ENCODE measurements at regions of chr22 and their contacts with region 1.

Region 1: GRCh38 chr22:42614312-42615091 is at the start of gene POLDIP3:
- DNase-seq: peak; percentile 96 to 99 (median 98)
- ATAC-seq: peak; percentile 84
- H3K4me3 ChIP-seq: peak within 1 kb of the TSS; percentile 91
- H3K4me3 Mint-ChIP-seq: peak within 1 kb of the TSS; percentile 92 to 99 (median 97)
- H3K27ac ChIP-seq: peak within 1 kb of the TSS; percentile 91
- H3K27ac Mint-ChIP-seq: peak within 1 kb of the TSS; percentile 98 to 100 (median 100)
- H3K4me1 ChIP-seq: peaks cover 34 to 40% of the 10 kb centered on the region in 2 donors
- H3K4me1 Mint-ChIP-seq: peaks cover 46 to 65% (median 54%) of the 10 kb centered on the region in 7 donors
- H3K27me3 ChIP-seq: no peaks in the 10 kb centered on the region
- H3K27me3 Mint-ChIP-seq: peaks cover 0 to 5% (median 0%) of the 10 kb centered on the region in 5 donors
- total RNA-seq, gene POLDIP3: 62.5 to 86.7 (median 75.2) TPM

Region 2: DNA sequence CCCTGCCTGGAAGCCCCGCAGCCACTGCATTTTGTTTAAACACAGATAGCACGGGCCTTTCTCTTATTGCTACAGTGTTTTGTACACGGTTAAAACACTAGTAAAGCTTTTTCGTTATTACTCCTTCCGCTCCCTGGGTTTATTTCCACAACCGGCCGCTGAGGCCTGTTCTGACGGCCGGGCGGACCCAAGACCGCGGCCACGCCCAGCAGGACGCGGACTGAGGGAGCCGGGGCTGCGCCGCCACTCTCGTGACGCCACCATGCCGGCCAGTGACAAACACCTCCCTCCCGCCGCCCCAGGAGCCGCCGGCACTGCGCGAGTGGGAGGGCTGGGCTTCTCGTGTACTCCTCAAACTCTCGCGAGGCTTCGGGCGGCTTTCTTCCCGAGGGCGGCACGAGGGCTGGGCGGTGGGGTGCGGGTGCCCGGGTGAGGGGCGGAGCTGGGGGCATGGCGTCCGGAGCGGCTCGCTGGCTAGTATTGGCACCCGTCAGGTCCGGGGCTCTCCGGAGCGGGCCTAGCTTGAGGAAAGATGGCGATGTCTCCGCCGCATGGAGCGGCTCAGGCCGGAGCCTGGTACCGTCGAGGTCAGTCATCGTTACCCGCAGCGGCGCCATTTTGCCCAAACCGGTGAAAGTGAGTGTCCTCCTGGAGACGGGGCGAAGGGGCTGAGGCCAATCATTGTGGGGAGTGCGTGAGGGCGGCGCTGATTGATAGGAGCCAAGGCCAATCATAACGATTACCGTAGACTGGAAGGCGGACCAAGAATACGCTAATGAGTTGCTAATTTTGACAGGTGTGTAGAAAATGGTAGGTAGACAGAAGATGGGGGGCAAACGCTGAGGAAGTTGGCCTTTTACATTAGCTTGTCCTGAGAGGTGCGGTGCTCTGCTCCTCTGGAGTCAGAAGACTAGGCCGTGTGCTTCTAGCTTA is 534.9 kb before region 1 on chr22 and contains the start of gene SMDT1:
- CTCF ChIA-PET with region 1: no interaction called
- POLR2A ChIA-PET with region 1: interaction called, 8 read pairs
- intact Hi-C with region 1: loop called in 1 of 2 experiments (anchors 1 kb)
- DNase-seq: peak; percentile 96 to 100 (median 99)
- ATAC-seq: peak; percentile 94
- H3K4me3 ChIP-seq: peak within 1 kb of the TSS; percentile 98
- H3K4me3 Mint-ChIP-seq: peak within 1 kb of the TSS; percentile 94 to 99 (median 96)
- H3K27ac ChIP-seq: peak within 1 kb of the TSS; percentile 97
- H3K27ac Mint-ChIP-seq: peak within 1 kb of the TSS; percentile 96 to 99 (median 99)
- H3K4me1 ChIP-seq: peaks cover 10 to 16% of the 10 kb centered on the region in 2 donors
- H3K4me1 Mint-ChIP-seq: peaks cover 9 to 52% (median 43%) of the 10 kb centered on the region in 7 donors
- H3K27me3 ChIP-seq: no peaks in the 10 kb centered on the region
- H3K27me3 Mint-ChIP-seq: no peaks in the 10 kb centered on the region
- total RNA-seq, gene SMDT1: 40.4 to 105 (median 98.8) TPM

Region 3: GRCh38 chr22:42520663-42521546 is 93.6 kb before region 1 on chr22:
- CTCF ChIA-PET with region 1: no interaction called
- POLR2A ChIA-PET with region 1: no interaction called
- intact Hi-C with region 1: loop called in 1 of 2 experiments (anchors 1 kb)
- DNase-seq: no peak
- ATAC-seq: no peak
- H3K4me3 ChIP-seq: no peak overlapping the region
- H3K4me3 Mint-ChIP-seq: peak overlapping the region; percentile 30 to 96 (median 54)
- H3K27ac ChIP-seq: no peak overlapping the region
- H3K27ac Mint-ChIP-seq: peak overlapping the region in 8 of 9 donors; percentile 29 to 97 (median 42)
- H3K4me1 ChIP-seq: peaks cover 0 to 8% of the 10 kb centered on the region in 2 donors
- H3K4me1 Mint-ChIP-seq: peaks cover 5 to 20% (median 13%) of the 10 kb centered on the region in 7 donors
- H3K27me3 ChIP-seq: no peaks in the 10 kb centered on the region
- H3K27me3 Mint-ChIP-seq: no peaks in the 10 kb centered on the region

Region 4: GRCh38 chr22:42553475-42554361 is 60.8 kb before region 1 on chr22 and contains the start of gene SERHL2:
- CTCF ChIA-PET with region 1: no interaction called
- POLR2A ChIA-PET with region 1: interaction called, 3 read pairs
- intact Hi-C with region 1: loop called in 1 of 2 experiments (anchors 2 kb)
- DNase-seq: peak; percentile 59 to 92 (median 77)
- ATAC-seq: peak; percentile 97
- H3K4me3 ChIP-seq: peak within 1 kb of the TSS; percentile 77
- H3K4me3 Mint-ChIP-seq: peak within 1 kb of the TSS; percentile 69 to 92 (median 84)
- H3K27ac ChIP-seq: peak within 1 kb of the TSS; percentile 47
- H3K27ac Mint-ChIP-seq: peak within 1 kb of the TSS in 6 of 9 donors; percentile 30 to 55 (median 48)
- H3K4me1 ChIP-seq: peaks cover 0 to 4% of the 10 kb centered on the region in 2 donors
- H3K4me1 Mint-ChIP-seq: peaks cover 0 to 16% (median 9%) of the 10 kb centered on the region in 7 donors
- H3K27me3 ChIP-seq: no peaks in the 10 kb centered on the region
- H3K27me3 Mint-ChIP-seq: peaks cover 0 to 4% (median 0%) of the 10 kb centered on the region in 5 donors
- total RNA-seq, gene SERHL2: 0.27 to 1.0 (median 0.82) TPM in 4 of 5 experiments, not detected in the other

Region 5: DNA sequence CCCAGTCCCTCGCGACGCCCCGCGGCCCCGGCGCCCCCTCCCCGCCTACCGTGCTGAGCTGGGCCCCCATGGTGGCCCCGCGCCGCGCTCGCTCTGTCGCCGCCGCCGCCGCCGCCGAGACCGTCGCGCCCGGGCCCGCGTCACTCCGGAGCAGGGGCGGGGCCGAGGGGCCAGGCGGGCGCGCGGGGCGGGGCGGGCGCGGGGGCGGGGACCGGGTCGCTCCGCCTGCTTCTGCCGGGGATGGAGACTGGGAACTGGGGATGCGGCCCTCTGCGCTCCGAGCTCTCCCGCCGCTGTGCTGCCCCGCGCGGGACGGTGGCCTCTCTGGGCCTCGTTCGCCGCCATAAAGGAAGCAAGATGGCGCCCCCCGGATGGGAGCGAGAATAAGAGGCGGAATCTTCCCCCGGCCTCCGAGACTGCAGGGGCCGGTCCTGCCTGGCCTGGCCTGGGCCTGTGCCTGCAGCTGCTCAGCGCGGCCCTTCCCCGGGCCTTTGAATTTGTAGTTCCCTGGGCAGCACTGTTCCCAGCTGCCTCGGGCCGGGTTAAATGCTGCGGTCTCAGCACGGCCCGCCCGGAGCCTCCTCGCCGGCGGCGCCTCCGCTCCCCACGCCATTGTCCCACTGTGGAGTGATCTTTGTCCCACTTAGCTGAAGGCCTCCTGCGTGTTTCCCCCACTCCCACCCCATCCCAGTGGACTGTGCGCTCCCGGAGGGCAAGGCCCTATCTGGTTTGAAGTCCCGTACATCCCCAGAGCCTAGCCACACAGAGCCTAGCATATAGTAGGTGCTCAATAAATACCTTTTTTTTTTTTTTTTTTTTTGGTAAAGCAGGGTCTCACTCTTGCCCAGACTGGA is 35.0 kb after region 1 on chr22 and contains the start of gene CYB5R3:
- CTCF ChIA-PET with region 1: no interaction called
- POLR2A ChIA-PET with region 1: interaction called, 19 read pairs
- intact Hi-C with region 1: loop called (anchors 1 kb)
- DNase-seq: peak; percentile 59 to 84 (median 76)
- ATAC-seq: peak; percentile 89
- H3K4me3 ChIP-seq: peak within 1 kb of the TSS; percentile 77
- H3K4me3 Mint-ChIP-seq: peak within 1 kb of the TSS; percentile 91 to 100 (median 98)
- H3K27ac ChIP-seq: peak within 1 kb of the TSS; percentile 84
- H3K27ac Mint-ChIP-seq: peak within 1 kb of the TSS; percentile 91 to 100 (median 98)
- H3K4me1 ChIP-seq: peaks cover 11 to 16% of the 10 kb centered on the region in 2 donors
- H3K4me1 Mint-ChIP-seq: peaks cover 7 to 38% (median 28%) of the 10 kb centered on the region in 7 donors
- H3K27me3 ChIP-seq: no peaks in the 10 kb centered on the region
- H3K27me3 Mint-ChIP-seq: peaks cover 0 to 2% (median 0%) of the 10 kb centered on the region in 5 donors
- total RNA-seq, gene CYB5R3: 34.3 to 70.6 (median 42.3) TPM

Region 6: DNA sequence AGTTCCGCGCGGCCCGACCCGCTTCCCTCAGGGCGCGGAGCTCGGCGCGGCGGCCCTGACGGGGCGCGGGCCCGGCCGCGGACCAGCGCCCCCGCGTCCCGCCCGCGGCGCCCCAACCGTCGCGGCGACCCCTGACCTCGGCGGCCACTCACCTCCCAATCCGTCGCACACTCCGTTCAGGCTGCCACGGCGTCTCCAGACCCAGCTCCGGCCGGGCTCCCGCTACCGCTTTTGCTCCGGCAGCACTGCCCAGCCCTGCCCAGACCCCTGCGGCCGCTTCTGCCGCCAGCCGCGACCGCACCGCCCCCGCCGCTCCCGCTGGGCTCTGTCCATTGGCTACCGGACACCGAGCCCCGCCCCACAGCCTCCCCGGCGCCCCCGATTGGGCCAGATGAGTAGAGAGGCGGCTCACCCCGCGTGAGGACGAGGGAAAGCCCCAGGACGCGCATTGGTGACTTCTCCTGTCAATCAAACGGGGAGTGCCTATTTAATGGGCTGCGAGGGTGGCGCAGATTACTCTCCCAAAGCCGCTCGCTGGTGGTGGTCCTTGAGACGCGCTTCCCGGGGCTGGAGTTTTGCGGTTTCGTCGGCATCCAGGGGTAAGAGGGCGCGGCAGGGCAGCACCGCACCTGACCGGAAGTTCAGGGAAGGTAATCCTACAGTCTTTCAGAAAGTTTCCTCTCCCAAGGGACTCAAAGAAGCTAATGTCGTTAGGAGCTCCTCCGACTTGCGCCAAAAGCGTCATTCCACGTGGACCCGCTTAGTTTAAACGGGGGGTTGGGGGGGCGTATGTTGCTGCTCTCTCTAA is 400.6 kb after region 1 on chr22 and contains the start of gene PACSIN2:
- CTCF ChIA-PET with region 1: no interaction called
- POLR2A ChIA-PET with region 1: no interaction called
- intact Hi-C with region 1: loop called in 1 of 2 experiments (anchors 1 kb)
- DNase-seq: peak; percentile 95 to 99 (median 97)
- ATAC-seq: peak; percentile 99
- H3K4me3 ChIP-seq: peak within 1 kb of the TSS; percentile 91
- H3K4me3 Mint-ChIP-seq: peak within 1 kb of the TSS; percentile 93 to 99 (median 98)
- H3K27ac ChIP-seq: peak within 1 kb of the TSS; percentile 83
- H3K27ac Mint-ChIP-seq: peak within 1 kb of the TSS; percentile 87 to 98 (median 95)
- H3K4me1 ChIP-seq: peaks cover 9 to 17% of the 10 kb centered on the region in 2 donors
- H3K4me1 Mint-ChIP-seq: peaks cover 18 to 56% (median 42%) of the 10 kb centered on the region in 7 donors
- H3K27me3 ChIP-seq: no peaks in the 10 kb centered on the region
- H3K27me3 Mint-ChIP-seq: peaks cover 0 to 5% (median 0%) of the 10 kb centered on the region in 5 donors
- total RNA-seq, gene PACSIN2: 27.6 to 62.5 (median 38.1) TPM